ENCODE measurements at regions of chr10 and their contacts with region 1.

Region 1: DNA sequence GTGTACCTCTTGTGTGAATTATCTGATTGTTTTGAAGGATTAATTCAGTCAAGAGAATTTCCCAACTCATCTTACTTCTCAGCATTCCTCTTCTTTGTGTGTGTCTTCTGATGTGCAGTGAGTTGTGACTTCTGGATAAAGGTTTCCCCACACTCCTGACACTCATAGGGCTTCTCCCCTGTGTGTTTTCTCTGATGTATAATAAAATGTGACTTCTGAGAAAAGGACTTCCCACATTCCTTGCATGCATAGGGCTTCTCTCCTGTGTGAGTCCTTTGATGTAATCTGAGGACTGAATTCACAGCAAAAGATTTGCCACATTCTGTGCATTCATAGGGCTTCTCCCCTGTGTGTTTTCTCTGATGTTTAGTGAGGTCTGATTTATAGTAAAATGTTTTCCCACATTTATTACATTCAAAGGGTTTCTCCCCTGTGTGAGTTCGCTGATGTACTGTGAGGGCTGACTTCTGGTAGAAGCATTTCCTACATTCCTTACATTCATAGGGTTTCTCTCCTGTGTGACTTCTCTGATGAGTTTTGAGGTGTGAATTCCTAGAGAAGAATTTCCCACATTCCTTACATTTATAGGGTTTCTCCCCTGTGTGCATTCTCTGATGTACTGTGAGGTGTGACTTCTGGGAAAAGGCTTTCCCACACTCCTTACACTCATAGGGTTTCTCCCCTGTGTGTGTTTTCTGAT is 24.2 kb downstream of the ZNF25 start:
- DNase-seq: no peak
- H3K4me3 ChIP-seq: no peak overlapping the region
- H3K27ac ChIP-seq: no peak overlapping the region
- H3K4me1 ChIP-seq: no peaks in the 10 kb centered on the region
- H3K27me3 ChIP-seq: no peaks in the 10 kb centered on the region
- CTCF ChIP-seq: no peak

Region 2: DNA sequence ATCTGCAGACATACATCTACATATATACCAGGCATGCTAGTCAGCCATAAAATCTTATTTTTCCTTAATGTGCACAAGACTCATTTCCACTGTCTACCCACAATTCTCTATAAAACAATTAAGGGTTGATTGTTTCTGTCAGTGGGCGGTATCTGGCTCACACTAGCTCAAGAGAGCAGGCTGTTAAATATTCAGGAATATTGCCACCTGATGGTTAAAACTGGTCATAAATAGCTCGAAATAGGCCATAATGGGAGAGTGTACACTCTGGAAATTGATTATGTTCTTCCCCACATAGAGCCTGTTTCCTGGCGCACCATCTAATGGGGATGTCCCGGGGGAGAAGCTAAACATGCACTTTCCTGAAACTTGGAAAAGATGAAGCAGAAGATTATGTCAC is 1447.4 kb before region 1 on chr10:
- CTCF ChIA-PET with region 1: no interaction called
- POLR2A ChIA-PET with region 1: no interaction called
- intact Hi-C with region 1: no loop called
- DNase-seq: peak; percentile 48
- H3K4me3 ChIP-seq: no peak overlapping the region
- H3K27ac ChIP-seq: no peak overlapping the region
- H3K4me1 ChIP-seq: peaks cover 14% of the 10 kb centered on the region
- H3K27me3 ChIP-seq: no peaks in the 10 kb centered on the region
- CTCF ChIP-seq: peak; percentile 39

Region 3: GRCh38 chr10:38038107-38038931 is 86.1 kb after region 1 on chr10:
- CTCF ChIA-PET with region 1: no interaction called
- POLR2A ChIA-PET with region 1: no interaction called
- intact Hi-C with region 1: loop called (anchors 10 kb)
- DNase-seq: no peak
- H3K4me3 ChIP-seq: no peak overlapping the region
- H3K27ac ChIP-seq: no peak overlapping the region
- H3K4me1 ChIP-seq: no peaks in the 10 kb centered on the region
- H3K27me3 ChIP-seq: no peaks in the 10 kb centered on the region
- CTCF ChIP-seq: no peak